ENCODE measurements at regions of chr14 and their contacts with region 1.

Region 1: DNA sequence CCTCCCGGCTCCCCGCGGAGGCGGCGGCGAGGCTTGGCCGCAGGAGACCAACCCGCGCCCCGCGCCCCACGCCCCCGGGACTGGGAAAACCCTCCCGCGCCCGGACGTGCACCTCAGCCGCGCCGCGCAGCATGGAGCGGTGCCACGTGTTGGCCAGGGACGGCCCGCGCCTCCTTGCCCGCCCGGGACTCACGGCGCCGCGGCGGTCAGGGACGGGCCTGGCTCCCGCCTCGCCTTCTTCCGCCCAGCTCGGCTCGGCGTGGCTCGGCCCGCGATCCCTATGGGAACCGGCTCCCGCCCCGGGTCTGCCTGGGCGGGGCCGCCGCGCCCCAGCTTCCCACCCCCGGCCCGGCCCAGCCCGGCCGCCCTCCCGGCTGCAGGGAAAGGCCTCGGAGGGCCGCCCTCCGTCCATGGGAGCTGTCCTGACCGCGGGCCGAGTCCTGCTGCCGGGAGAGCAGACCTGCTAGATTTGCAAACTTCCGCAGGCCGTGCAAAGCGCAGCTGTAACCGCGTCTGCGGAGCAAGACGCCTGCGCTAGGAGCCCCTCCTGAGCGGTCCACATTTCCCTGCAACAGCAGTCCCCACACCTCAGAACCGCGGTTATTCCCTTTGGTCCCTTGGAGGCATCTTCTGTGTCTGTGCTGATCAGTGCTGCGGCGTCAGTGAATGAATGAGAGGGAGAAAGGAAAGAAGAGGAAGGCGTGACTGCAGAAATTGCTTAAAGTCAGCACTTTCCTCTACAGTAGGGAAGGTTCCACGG is at the start of gene CDKL1:
- DNase-seq: peak in 1 of 2 experiments; percentile 84
- H3K4me3 ChIP-seq: peak within 1 kb of the TSS; percentile 60 to 75 (median 70)
- H3K27ac ChIP-seq: no peak within 1 kb of the TSS; the same call in 1 of the 2 replicates
- H3K4me1 ChIP-seq: peaks cover 4 to 12% (median 7%) of the 10 kb centered on the region in 4 experiments; a peak in 6 of 7 replicates
- H3K27me3 ChIP-seq: peaks cover 0 to 14% (median 9%) of the 10 kb centered on the region in 4 experiments; a peak in 4 of 7 replicates
- CTCF ChIP-seq: no peak
- EP300 ChIP-seq: no peak
- POLR2A ChIP-seq: peak in 1 of 2 experiments; percentile 42; a peak in 1 of 3 replicates
- RAD21 ChIP-seq: no peak
- total RNA-seq, gene CDKL1: 1.6 and 2.2 TPM in 2 replicates

Region 2: DNA sequence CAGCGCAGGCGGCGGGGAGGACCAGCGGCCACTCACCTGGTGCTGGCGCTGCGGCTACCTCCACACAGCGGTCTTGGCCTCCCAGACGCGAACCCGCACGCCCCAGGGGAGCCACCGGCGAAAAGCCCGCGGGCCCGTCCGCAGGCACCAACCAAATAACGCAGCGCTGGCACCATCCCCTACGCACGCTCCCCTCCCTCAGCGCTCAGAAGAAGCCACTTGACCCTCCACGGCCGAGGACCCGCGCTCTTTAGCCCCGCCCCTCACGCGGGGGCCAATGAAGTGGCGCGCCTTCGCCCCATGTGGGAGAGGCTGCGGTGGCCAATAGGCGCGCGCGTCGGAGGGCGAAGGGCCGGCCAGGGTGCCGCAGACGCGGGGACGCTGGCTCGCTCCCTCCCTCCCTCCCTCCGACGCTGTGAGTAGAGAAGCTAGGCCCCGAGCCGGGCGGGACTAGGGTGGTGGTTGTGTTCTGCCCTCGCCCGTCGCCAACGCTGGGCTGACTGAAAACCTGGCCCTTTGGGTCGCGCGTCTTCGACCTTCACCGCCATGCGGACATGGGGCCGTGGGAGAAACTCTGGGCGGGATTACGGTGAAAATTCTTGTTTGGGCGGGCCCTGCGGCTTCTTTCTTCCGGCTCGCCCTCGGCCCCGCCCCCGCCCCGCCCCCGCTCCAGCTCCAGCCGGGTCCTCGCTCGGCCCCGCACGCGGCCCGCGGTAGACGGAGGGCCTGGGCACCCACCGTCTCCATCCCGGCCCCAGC is 84.7 kb before region 1 on chr14 and contains the starts of genes DMAC2L and L2HGDH:
- CTCF ChIA-PET with region 1: interaction called, 3 read pairs
- POLR2A ChIA-PET with region 1: interaction called, 10 read pairs
- DNase-seq: peak; percentile 84 to 95
- H3K4me3 ChIP-seq: peak within 1 kb of the TSS; percentile 83 to 91 (median 86)
- H3K27ac ChIP-seq: peak within 1 kb of the TSS; percentile 90
- H3K4me1 ChIP-seq: peaks cover 0 to 5% (median 1%) of the 10 kb centered on the region in 4 experiments; a peak in 3 of 7 replicates
- H3K27me3 ChIP-seq: no peaks in the 10 kb centered on the region
- CTCF ChIP-seq: peak in 1 of 3 experiments; percentile 84; a peak in 2 of 4 replicates
- EP300 ChIP-seq: no peak
- POLR2A ChIP-seq: peak; percentile 13 to 85; a peak in 2 of 3 replicates
- RAD21 ChIP-seq: no peak
- total RNA-seq, gene DMAC2L: 19.7 and 20.3 TPM in 2 replicates
- total RNA-seq, gene L2HGDH: 28.6 and 29.7 TPM in 2 replicates

Region 3: DNA sequence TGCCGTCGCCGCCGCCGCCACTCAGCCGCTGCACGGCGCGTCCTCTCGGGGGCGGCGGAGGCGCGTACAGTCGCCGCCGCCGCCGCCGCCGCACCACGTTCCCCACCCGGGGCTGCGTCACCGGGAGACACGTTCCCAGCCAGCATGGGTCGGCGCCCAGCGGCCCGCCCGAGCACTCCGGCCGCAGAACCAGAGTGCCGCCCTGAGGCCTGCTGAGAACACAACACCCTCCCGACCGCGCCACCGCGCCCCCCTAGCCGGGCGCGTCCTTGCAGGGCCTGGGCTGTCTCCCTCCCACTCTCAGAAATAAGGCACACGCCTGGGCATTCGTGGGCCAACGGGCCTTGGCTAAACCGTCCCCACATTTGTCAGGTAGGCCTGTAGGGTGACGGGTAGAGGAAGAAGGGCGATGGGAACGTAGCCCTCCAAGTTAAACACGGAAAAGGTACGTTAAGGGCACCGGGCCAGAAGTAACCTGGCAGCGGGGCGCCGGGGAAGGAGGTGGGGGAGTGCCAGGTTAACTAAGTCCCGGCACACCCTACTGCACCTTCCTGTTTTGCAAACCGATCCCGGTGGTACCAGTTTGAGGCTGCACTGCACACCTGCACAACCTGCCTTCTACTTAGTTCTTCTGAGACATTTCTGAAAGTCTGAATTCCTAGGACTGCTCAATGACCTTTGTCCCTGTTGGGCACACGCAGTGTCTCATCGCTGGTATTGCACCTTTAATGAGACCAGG is 135.9 kb after region 1 on chr14 and contains the start of gene MAP4K5:
- CTCF ChIA-PET with region 1: interaction called, 3 read pairs
- POLR2A ChIA-PET with region 1: interaction called, 10 read pairs
- DNase-seq: peak; percentile 69 to 90
- H3K4me3 ChIP-seq: peak within 1 kb of the TSS; percentile 75 to 91 (median 86)
- H3K27ac ChIP-seq: peak within 1 kb of the TSS; percentile 86
- H3K4me1 ChIP-seq: peaks cover 0 to 6% (median 5%) of the 10 kb centered on the region in 4 experiments; a peak in 3 of 7 replicates
- H3K27me3 ChIP-seq: no peaks in the 10 kb centered on the region
- CTCF ChIP-seq: peak; percentile 81 to 91 (median 83)
- EP300 ChIP-seq: peak in 1 of 2 experiments; percentile 83; a peak in 1 of 3 replicates
- POLR2A ChIP-seq: peak in 1 of 2 experiments; percentile 15; a peak in 1 of 3 replicates
- RAD21 ChIP-seq: peak; percentile 91 to 96
- total RNA-seq, gene MAP4K5: 34.5 and 35.3 TPM in 2 replicates

Measured in H1 (cell line).